ENCODE measurements at regions of chr12 and their contacts with region 1.

Region 1: GRCh38 chr12:104877123-104877705 is 80.9 kb downstream of the SLC41A2 start:
- DNase-seq: no peak
- ATAC-seq: peak; percentile 75
- H3K4me3 ChIP-seq: no peak overlapping the region
- H3K27ac ChIP-seq: no peak overlapping the region
- H3K4me1 ChIP-seq: no peaks in the 10 kb centered on the region
- H3K27me3 ChIP-seq: no peaks in the 10 kb centered on the region
- CTCF ChIP-seq: peak; percentile 51 to 79 (median 65)
- POLR2A ChIP-seq: no peak
- RAD21 ChIP-seq: peak; percentile 92

Region 2: DNA sequence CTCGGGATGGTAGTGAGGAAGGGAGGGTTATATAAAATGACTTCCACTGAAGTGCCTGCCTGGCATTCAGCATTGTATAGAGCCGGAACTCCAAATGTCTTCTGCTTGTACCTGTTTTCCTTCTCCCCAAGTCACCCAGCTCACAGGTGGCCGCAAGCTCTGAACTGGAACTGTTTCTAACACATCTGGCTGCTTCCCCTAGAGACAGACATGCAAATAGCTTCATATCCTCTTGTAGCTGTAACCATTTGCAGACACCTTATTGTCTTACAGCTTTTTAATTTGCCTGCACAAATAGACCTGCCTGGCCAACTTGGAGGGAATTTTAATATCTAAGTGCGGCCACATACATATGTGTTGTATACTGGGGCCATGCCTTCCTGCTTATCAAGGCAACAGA is 294.5 kb before region 1 on chr12:
- CTCF ChIA-PET with region 1: no interaction called
- POLR2A ChIA-PET with region 1: no interaction called
- RAD21 ChIA-PET with region 1: no interaction called
- intact Hi-C with region 1: loop called (anchors 5 kb)
- DNase-seq: no peak
- ATAC-seq: no peak
- H3K4me3 ChIP-seq: no peak overlapping the region
- H3K27ac ChIP-seq: no peak overlapping the region
- H3K4me1 ChIP-seq: peaks cover under 1 to 46% of the 10 kb centered on the region in 2 experiments; a peak in 3 of 4 replicates
- H3K27me3 ChIP-seq: no peaks in the 10 kb centered on the region
- CTCF ChIP-seq: no peak
- POLR2A ChIP-seq: no peak
- RAD21 ChIP-seq: no peak

Region 3: DNA sequence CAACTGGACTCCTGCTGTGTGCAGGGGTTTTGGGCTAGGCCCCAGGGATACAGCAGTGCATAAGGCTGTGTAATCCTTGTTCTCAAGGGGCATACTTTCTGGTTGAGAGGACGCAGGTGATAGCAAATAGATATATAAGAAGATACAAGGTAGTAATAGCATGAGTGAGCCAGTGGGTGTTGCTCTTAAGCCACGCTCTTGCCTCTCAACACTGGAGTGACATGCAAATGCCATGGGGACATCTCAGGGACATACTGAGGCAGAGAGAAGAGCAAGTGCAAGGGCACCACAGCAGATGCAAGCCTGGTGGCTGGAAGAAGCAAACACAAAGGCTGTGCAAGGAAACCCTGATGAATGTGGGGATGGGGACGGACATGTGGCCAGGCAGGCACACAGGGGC is 197.1 kb before region 1 on chr12:
- CTCF ChIA-PET with region 1: no interaction called
- POLR2A ChIA-PET with region 1: no interaction called
- RAD21 ChIA-PET with region 1: no interaction called
- intact Hi-C with region 1: loop called (anchors 1 kb)
- DNase-seq: peak; percentile 13
- ATAC-seq: peak; percentile 76; the same call in 1 of the 2 replicates
- H3K4me3 ChIP-seq: no peak overlapping the region
- H3K27ac ChIP-seq: no peak overlapping the region
- H3K4me1 ChIP-seq: peaks cover 17 to 23% of the 10 kb centered on the region in 2 experiments
- H3K27me3 ChIP-seq: no peaks in the 10 kb centered on the region
- CTCF ChIP-seq: peak; percentile 23 to 57 (median 37); a peak in 4 of 6 replicates
- POLR2A ChIP-seq: no peak
- RAD21 ChIP-seq: peak; percentile 71

Region 4: GRCh38 chr12:105409801-105410471 is 532.7 kb after region 1 on chr12:
- CTCF ChIA-PET with region 1: no interaction called
- POLR2A ChIA-PET with region 1: no interaction called
- RAD21 ChIA-PET with region 1: no interaction called
- intact Hi-C with region 1: no loop called
- DNase-seq: no peak
- ATAC-seq: no peak
- H3K4me3 ChIP-seq: no peak overlapping the region
- H3K27ac ChIP-seq: no peak overlapping the region
- H3K4me1 ChIP-seq: no peaks in the 10 kb centered on the region
- H3K27me3 ChIP-seq: no peaks in the 10 kb centered on the region
- CTCF ChIP-seq: no peak
- POLR2A ChIP-seq: no peak
- RAD21 ChIP-seq: no peak

Measured in HCT116 (cell line).